Endothelial cell of umbilical vein (primary cell): ENCODE measurements at regions of chr1 and their contacts with region 1.

Region 1: GRCh38 chr1:78601068-78601467 is 19.2 kb upstream of the IFI44L start:
- DNase-seq: peak; percentile 9
- H3K4me3 ChIP-seq: no peak overlapping the region
- H3K27ac ChIP-seq: no peak overlapping the region
- H3K4me1 ChIP-seq: no peaks in the 10 kb centered on the region
- H3K27me3 ChIP-seq: no peaks in the 10 kb centered on the region
- CTCF ChIP-seq: no peak
- POLR2A ChIP-seq: no peak

Region 2: GRCh38 chr1:78132174-78132947 is 468.7 kb before region 1 on chr1:
- CTCF ChIA-PET with region 1: interaction called, 97 read pairs
- POLR2A ChIA-PET with region 1: no interaction called
- dilution Hi-C with region 1: no loop called
- intact Hi-C with region 1: no loop called
- DNase-seq: no peak
- H3K4me3 ChIP-seq: no peak overlapping the region
- H3K27ac ChIP-seq: no peak overlapping the region
- H3K4me1 ChIP-seq: no peaks in the 10 kb centered on the region
- H3K27me3 ChIP-seq: no peaks in the 10 kb centered on the region
- CTCF ChIP-seq: no peak
- POLR2A ChIP-seq: no peak

Region 3: GRCh38 chr1:78627321-78627720 is 26.3 kb after region 1 on chr1:
- CTCF ChIA-PET with region 1: no interaction called
- POLR2A ChIA-PET with region 1: no interaction called
- dilution Hi-C with region 1: no loop called
- intact Hi-C with region 1: no loop called
- DNase-seq: no peak
- H3K4me3 ChIP-seq: no peak overlapping the region
- H3K27ac ChIP-seq: no peak overlapping the region
- H3K4me1 ChIP-seq: no peaks in the 10 kb centered on the region
- H3K27me3 ChIP-seq: no peaks in the 10 kb centered on the region
- CTCF ChIP-seq: no peak
- POLR2A ChIP-seq: no peak